ENCODE measurements at regions of chr1 and their contacts with region 1.

Region 1: GRCh38 chr1:84406346-84406861 is 8.1 kb downstream of the DNASE2B start:
- DNase-seq: peak; percentile 73
- H3K4me3 Mint-ChIP-seq: no peak overlapping the region
- H3K27ac Mint-ChIP-seq: no peak overlapping the region
- H3K4me1 Mint-ChIP-seq: peaks cover 10% of the 10 kb centered on the region
- H3K27me3 Mint-ChIP-seq: no peaks in the 10 kb centered on the region
- CTCF ChIP-seq: no peak

Region 2: DNA sequence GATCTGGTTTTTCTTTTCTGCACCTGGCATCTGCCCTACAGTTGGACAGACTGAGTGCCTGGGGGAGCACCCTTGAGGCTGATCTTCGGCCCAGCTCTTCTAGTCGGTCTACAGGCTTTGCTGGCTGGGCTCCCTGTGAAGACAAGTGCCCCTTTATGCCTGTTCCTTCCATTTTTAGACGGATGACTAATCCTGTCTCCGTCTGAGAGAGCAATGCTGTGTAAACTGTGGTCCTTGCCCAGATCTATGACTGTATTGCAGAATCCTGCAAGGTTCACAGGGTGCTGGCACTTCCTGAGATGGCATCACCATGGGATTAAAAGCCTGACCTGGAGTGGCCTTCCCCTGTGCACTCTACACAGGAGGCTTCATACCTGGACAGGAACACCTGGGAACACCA is 152.5 kb before region 1 on chr1:
- CTCF ChIA-PET with region 1: no interaction called
- POLR2A ChIA-PET with region 1: no interaction called
- intact Hi-C with region 1: loop called (anchors 10 kb)
- DNase-seq: peak; percentile 93
- H3K4me3 Mint-ChIP-seq: no peak overlapping the region
- H3K27ac Mint-ChIP-seq: peak overlapping the region; percentile 46
- H3K4me1 Mint-ChIP-seq: peaks cover 12% of the 10 kb centered on the region
- H3K27me3 Mint-ChIP-seq: no peaks in the 10 kb centered on the region
- CTCF ChIP-seq: no peak

Region 3: DNA sequence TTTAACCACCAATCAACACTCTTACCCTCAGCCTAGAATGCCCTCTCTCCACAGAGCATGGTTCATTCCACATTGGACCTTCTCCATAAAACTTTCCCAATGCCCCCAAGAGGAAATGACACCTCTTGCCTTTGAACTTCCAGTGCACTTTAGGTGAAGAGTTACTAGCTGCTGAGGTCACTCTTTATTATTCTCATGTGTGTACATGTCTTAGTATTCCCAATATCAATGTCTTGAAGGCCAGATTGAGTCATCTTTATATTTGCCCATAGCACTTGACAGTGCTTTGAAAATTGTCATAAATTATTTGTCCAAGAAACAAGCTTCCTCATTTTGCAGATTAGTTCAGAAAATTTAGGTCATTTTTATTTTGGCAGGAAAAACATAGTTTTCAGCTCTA is 16.2 kb before region 1 on chr1:
- CTCF ChIA-PET with region 1: interaction called, 4 read pairs
- POLR2A ChIA-PET with region 1: interaction called, 11 read pairs
- intact Hi-C with region 1: no loop called
- DNase-seq: peak; percentile 34
- H3K4me3 Mint-ChIP-seq: no peak overlapping the region
- H3K27ac Mint-ChIP-seq: no peak overlapping the region
- H3K4me1 Mint-ChIP-seq: peaks cover 5% of the 10 kb centered on the region
- H3K27me3 Mint-ChIP-seq: no peaks in the 10 kb centered on the region
- CTCF ChIP-seq: no peak

Region 4: GRCh38 chr1:84632673-84633434 is 226.4 kb after region 1 on chr1:
- CTCF ChIA-PET with region 1: no interaction called
- POLR2A ChIA-PET with region 1: no interaction called
- intact Hi-C with region 1: no loop called
- DNase-seq: peak; percentile 62
- H3K4me3 Mint-ChIP-seq: no peak overlapping the region
- H3K27ac Mint-ChIP-seq: no peak overlapping the region
- H3K4me1 Mint-ChIP-seq: peaks cover 22% of the 10 kb centered on the region
- H3K27me3 Mint-ChIP-seq: no peaks in the 10 kb centered on the region
- CTCF ChIP-seq: no peak